Aorta (tissue), 5 donors: ENCODE measurements at regions of chr15 and their contacts with region 1.

Region 1: GRCh38 chr15:31435261-31435911 is 108.8 kb downstream of the KLF13 start:
- DNase-seq: peak; percentile 81 to 85
- ATAC-seq: peak; percentile 87
- H3K4me3 ChIP-seq: no peak overlapping the region
- H3K27ac ChIP-seq: no peak overlapping the region
- H3K4me1 ChIP-seq: no peaks in the 10 kb centered on the region
- H3K27me3 ChIP-seq: no peaks in the 10 kb centered on the region

Region 2: DNA sequence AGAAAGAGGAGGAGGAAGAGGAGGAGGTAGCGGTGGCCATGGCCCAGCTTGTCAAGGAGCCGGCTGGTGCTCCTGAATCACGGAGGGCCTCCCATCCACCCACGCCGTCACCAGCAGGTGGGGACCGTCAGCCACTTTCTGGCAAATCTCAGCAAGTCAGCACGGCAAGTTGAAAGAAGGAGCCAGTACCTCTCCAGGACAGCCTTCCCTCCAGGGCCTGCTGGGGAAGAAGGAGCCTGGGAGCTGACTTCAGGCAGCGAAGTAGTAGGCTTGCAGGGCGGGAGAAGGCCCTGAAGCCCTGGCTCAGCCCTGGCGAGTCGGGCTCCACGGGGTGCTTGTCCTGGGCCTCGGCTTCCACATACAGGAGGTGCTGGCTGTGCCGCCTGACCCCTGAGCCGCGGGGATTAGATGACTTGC is 234.6 kb before region 1 on chr15:
- intact Hi-C with region 1: loop called in 1 of 2 experiments (anchors 5 kb)
- DNase-seq: peak; percentile 76 to 85
- ATAC-seq: peak; percentile 85
- H3K4me3 ChIP-seq: no peak overlapping the region
- H3K27ac ChIP-seq: no peak overlapping the region
- H3K4me1 ChIP-seq: no peaks in the 10 kb centered on the region
- H3K27me3 ChIP-seq: no peaks in the 10 kb centered on the region

Region 3: DNA sequence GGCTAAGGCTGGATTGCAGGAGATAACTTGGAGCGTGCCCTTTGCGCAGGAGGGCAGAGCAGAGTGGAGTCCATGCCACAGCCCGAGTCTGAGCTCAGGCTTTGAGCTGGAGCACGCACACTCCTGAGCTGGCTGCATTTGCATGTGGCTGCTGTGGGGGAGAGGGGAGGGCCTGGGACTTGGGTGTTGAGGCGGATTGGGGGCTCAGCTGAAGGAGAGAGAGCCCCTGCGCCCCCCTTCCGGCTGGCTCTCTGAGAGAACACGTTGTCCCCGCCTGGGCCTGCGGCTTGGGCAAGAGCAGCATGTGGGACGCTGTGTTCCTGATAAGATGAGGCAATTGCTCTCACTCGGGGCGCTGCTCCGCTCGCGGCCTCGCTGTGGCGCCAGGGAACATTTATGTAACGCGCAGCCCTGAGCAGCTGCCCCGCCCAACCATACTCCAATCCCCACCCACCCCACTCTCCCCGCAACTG is 69.7 kb before region 1 on chr15:
- intact Hi-C with region 1: loop called in 1 of 2 experiments (anchors 1 kb)
- DNase-seq: peak; percentile 90 to 91
- ATAC-seq: peak; percentile 94
- H3K4me3 ChIP-seq: no peak overlapping the region
- H3K27ac ChIP-seq: peak overlapping the region in 1 of 2 donors; percentile 80
- H3K4me1 ChIP-seq: peaks cover 0 to 3% of the 10 kb centered on the region in 2 donors
- H3K27me3 ChIP-seq: no peaks in the 10 kb centered on the region